PC-9 (cell line): ENCODE measurements at regions of chr5 and their contacts with region 1.

Region 1: DNA sequence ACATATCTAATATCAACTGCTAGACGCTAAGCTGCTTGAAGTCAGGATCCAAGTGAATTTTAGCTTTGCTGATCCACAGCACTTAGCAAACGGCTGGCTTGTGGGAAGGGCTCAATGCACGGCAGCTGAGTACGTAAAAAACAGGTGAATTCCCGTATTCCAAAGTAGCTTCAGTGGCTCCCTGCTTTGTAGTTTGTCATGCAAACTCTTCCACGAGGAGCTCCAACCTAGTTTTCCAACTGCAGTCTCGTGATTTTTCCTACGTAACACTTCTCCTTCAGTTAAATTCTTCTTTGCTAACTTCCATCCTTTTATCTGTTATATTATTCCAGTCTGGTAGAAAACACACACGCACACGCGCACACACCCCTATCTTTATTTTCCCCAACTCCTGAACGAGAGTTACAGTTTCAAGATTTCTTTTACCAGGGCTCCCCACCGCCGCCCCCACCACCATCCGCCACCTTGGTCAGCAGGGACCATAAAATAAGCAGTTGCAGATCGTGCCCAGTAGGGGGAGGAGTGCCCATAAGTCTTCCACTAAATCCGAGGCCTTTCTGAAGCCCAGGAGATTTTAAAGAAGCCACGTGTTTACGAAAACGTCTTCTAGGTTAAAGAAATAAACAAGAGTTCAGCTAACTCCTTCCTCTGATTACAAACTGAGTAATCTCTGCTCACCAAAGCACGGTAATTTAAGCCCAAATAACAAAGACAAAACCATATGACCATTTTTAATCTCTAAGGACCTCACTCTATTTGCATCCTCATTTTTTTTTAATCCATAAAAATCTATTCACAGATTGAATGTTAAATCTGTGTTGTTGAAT is 34.8 kb upstream of the TRIO start:
- DNase-seq: peak in 1 of 2 experiments; percentile 81
- H3K4me3 ChIP-seq: no peak overlapping the region
- H3K27ac ChIP-seq: peak overlapping the region; percentile 22; the same call in 1 of the 2 replicates
- H3K4me1 ChIP-seq: peaks cover 10% of the 10 kb centered on the region
- H3K27me3 ChIP-seq: no peaks in the 10 kb centered on the region
- CTCF ChIP-seq: peak; percentile 59

Region 2: DNA sequence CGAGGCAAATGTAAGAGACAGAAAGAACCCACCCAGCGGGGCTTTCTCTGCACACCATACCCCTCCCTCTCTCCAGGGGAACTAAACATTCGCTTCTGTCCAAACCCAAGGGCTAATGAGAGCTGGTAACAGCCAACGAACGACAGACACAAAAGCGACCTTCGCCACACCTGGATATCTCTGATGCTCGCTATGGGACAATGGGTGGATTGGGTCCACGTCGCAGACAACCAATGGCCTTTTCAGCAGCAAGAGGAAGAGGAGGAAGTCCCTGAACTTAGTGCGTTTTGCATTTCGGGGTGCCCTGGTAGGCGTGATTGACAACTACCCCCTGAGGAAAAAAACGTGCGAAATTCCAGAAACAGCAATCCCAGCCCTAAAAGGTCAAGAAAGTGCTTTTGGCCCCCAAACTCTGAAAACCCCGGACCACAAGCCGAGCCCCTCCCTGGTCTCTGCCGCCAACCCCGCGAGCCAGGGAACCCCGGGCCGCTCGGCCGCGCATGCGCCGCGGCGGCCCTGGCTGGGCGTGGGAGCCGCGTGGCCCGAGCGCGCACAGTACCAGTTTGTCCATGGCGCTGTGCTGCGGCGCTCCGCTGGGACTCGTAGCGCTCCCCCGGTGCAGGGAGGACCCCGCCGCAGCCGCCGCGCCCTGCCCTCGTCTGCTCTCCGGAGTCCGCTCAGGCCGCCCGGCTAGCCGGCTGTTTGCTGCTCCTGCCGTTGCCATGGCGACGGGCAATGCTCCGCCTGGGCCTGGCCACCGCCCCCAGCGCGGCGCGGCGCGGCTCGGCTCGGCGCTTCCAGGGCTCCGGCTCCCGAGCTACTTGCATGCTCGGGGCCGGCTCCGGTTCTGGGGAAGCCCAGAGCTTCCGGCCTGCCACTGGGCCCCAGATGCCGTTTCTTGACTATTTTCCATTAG is 97.0 kb before region 1 on chr5:
- CTCF ChIA-PET with region 1: interaction called, 5 read pairs
- POLR2A ChIA-PET with region 1: interaction called, 4 read pairs
- intact Hi-C with region 1: loop called (anchors 1 kb)
- DNase-seq: peak; percentile 87 to 100
- H3K4me3 ChIP-seq: peak overlapping the region; percentile 63
- H3K27ac ChIP-seq: peak overlapping the region; percentile 75
- H3K4me1 ChIP-seq: peaks cover 40% of the 10 kb centered on the region
- H3K27me3 ChIP-seq: no peaks in the 10 kb centered on the region
- CTCF ChIP-seq: no peak

Region 3: DNA sequence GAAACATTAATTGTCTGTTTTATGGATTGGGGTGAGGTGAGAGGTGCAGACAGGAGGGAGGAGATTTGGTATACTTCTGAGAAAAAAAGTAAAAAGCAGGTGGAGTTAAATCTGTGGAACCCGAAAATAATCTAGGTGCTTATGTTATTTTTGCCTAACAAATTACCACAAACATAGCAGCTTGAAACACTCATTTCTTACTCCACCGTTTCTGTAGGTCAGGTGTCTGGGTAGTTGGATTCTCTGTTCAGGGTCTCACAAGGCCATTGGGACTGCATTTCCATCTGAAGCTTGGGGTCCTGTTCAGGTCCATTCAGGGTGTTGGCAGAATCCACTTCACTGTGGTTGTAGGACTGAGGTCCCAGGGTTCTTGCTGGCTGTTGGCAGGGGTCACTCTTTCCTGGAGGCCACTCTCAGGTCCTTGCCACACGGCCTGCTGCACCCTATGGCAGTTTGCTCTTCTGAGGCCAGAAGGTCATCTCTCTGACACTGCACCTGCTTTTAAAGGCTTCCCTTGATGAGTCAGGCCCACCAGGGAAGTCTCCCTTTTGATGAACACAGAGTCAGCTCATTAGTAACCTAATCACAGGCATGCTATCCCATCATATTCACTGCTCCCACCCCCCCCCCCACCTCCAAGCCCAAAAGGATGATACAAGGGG is 116.9 kb after region 1 on chr5:
- CTCF ChIA-PET with region 1: no interaction called
- POLR2A ChIA-PET with region 1: interaction called, 4 read pairs
- intact Hi-C with region 1: loop called (anchors 1 kb)
- DNase-seq: peak in 1 of 2 experiments; percentile 43
- H3K4me3 ChIP-seq: no peak overlapping the region
- H3K27ac ChIP-seq: peak overlapping the region; percentile 33; the same call in 1 of the 2 replicates
- H3K4me1 ChIP-seq: peaks cover 24% of the 10 kb centered on the region
- H3K27me3 ChIP-seq: no peaks in the 10 kb centered on the region
- CTCF ChIP-seq: no peak

Region 4: DNA sequence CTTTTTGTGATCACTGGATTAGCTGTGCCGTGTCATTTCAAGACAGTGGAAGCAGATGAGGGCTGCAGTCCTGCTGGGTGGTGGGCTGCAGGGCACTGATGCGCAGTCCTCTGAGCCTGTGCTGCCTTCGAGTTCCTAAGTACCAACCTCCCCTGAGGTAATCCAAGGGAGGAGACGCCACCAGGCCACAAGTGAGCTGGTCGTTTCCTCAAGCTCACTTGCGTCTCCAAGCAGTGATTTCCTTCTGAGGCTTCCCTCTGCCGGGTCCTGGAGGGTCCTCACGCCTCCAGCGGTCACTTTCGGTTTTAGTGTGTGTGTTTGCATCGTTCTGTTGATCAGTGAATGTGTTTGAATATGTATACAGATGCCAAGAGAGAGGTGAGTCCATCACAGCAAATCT is 150.5 kb after region 1 on chr5:
- CTCF ChIA-PET with region 1: no interaction called
- POLR2A ChIA-PET with region 1: interaction called, 15 read pairs
- intact Hi-C with region 1: no loop called
- DNase-seq: no peak
- H3K4me3 ChIP-seq: no peak overlapping the region
- H3K27ac ChIP-seq: no peak overlapping the region
- H3K4me1 ChIP-seq: peaks cover 6% of the 10 kb centered on the region
- H3K27me3 ChIP-seq: no peaks in the 10 kb centered on the region
- CTCF ChIP-seq: no peak

Region 5: DNA sequence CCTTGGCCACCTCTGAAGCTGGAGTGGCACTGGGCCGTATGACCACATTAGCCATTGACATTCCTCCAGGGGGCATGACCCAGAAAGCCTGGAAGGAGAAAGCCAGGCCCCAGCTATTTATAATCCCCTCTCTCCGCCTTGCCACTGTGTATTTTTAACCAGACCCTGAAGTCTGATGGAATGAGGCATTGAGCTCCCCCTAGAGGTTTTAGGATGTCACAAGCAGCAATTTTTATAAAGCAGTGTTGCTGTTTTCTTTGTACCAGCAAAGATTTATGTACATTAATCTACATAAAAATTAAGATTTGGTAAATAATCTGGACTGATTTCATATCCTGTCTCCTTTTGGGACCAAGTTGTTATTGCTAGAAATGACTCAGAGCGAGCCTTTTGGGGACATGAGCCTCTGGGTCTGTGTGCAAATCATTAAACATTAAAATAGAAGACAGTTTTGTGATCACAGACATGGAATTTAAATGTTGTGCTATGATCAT is 161.9 kb after region 1 on chr5:
- CTCF ChIA-PET with region 1: interaction called, 13 read pairs
- POLR2A ChIA-PET with region 1: interaction called, 4 read pairs
- intact Hi-C with region 1: loop called (anchors 1 kb)
- DNase-seq: peak; percentile 81 to 86
- H3K4me3 ChIP-seq: 0 out of 2 replicates have a peak overlapping the region, but pooled peaks have one; percentile 8
- H3K27ac ChIP-seq: peak overlapping the region; percentile 88
- H3K4me1 ChIP-seq: peaks cover 57% of the 10 kb centered on the region
- H3K27me3 ChIP-seq: no peaks in the 10 kb centered on the region
- CTCF ChIP-seq: peak; percentile 90

Region 6: DNA sequence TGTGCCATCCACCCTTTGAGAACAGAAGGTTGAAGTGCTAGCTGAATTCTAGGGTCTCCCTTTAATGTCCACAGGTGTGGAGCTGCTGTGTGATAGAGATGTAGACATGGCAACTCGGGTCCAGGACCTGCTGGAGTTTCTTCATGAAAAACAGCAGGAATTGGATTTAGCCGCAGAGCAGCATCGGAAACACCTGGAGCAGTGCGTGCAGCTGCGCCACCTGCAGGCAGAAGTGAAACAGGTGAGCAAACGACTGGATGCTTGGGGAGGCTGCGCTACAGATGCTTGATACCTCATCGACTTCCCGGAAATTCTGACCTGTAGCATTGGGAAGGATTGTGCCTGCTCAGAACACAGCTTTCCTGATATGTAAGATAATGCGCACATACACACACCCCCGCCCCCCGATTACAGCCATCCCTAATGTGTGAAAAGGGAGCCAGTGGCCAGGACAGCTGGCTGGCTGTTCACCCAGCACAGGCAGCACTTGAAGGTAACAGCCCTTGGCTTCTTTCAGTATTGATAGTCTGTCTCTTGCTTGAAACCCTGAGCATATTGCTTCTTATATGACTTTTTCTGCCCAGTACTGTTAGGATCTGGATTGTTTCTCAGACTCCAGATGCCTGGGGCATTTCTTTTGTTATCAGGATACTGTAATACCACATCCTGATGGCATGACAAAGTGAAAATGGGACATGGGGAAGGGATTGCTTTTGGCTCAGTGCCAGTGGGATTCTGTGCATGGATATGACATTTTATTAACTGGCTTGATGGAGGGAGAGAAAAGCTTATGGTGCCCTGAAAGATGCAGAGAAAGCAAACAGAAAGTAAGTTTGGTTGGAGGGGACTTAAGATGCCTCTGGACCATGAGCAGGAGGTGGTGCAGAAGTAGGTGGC is 256.4 kb after region 1 on chr5:
- CTCF ChIA-PET with region 1: no interaction called
- POLR2A ChIA-PET with region 1: interaction called, 3 read pairs
- intact Hi-C with region 1: loop called (anchors 1 kb)
- DNase-seq: peak in 1 of 2 experiments; percentile 53
- H3K4me3 ChIP-seq: no peak overlapping the region
- H3K27ac ChIP-seq: no peak overlapping the region
- H3K4me1 ChIP-seq: peaks cover 19% of the 10 kb centered on the region
- H3K27me3 ChIP-seq: no peaks in the 10 kb centered on the region
- CTCF ChIP-seq: peak; percentile 67

Region 7: DNA sequence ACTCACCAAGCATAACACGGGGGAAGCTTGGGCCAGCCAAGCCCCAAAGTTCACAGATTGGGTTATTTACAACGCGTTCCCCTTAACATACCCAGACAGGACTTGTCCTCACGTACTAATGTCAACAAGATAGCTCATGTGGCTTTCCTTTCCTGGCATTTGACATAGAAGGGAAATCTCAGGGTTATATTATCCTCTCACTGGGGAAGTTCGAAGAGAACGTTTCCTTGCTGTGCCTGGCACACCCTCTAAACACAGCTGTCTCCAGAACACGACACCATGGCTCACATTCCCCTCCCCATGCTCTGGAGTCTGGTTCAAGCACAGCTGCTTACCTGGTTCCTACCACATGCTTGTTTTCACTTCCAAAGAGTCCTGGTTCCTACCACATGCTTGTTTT is 426.4 kb after region 1 on chr5:
- CTCF ChIA-PET with region 1: no interaction called
- POLR2A ChIA-PET with region 1: no interaction called
- intact Hi-C with region 1: no loop called
- DNase-seq: no peak
- H3K4me3 ChIP-seq: no peak overlapping the region
- H3K27ac ChIP-seq: no peak overlapping the region
- H3K4me1 ChIP-seq: no peaks in the 10 kb centered on the region
- H3K27me3 ChIP-seq: no peaks in the 10 kb centered on the region
- CTCF ChIP-seq: no peak

Region 8: GRCh38 chr5:14983666-14984441 is 875.5 kb after region 1 on chr5:
- CTCF ChIA-PET with region 1: no interaction called
- POLR2A ChIA-PET with region 1: no interaction called
- intact Hi-C with region 1: no loop called
- DNase-seq: no peak
- H3K4me3 ChIP-seq: no peak overlapping the region
- H3K27ac ChIP-seq: no peak overlapping the region
- H3K4me1 ChIP-seq: no peaks in the 10 kb centered on the region
- H3K27me3 ChIP-seq: no peaks in the 10 kb centered on the region
- CTCF ChIP-seq: no peak